ENCODE measurements at regions of chr7 and their contacts with region 1.

Region 1: GRCh38 chr7:139502226-139502625 is 18.8 kb upstream of the KLRG2 start:
- DNase-seq: peak in 1 of 10 donors; percentile 38

Region 2: GRCh38 chr7:138720286-138720685 is 781.9 kb before region 1 on chr7:
- intact Hi-C with region 1: no loop called
- DNase-seq: no peak

Region 3: GRCh38 chr7:139566736-139567647 is 64.8 kb after region 1 on chr7:
- intact Hi-C with region 1: loop called (anchors 5 kb)
- DNase-seq: no peak

Region 4: GRCh38 chr7:140732436-140732835 is 1230.2 kb after region 1 on chr7:
- intact Hi-C with region 1: no loop called
- DNase-seq: no peak